Naive thymus-derived CD4-positive, alpha-beta T cell (primary cell): ENCODE measurements at regions of chr3 and their contacts with region 1.

Region 1: GRCh38 chr3:57597122-57597923 is at the start of gene ARF4:
- DNase-seq: peak; percentile 99 to 100 (median 100)
- ATAC-seq: peak; percentile 93
- H3K4me3 ChIP-seq: peak within 1 kb of the TSS; percentile 86
- H3K4me3 Mint-ChIP-seq: peak within 1 kb of the TSS; percentile 91 to 99 (median 98)
- H3K27ac ChIP-seq: peak within 1 kb of the TSS; percentile 94
- H3K27ac Mint-ChIP-seq: peak within 1 kb of the TSS; percentile 95 to 100 (median 99)
- H3K4me1 ChIP-seq: peaks cover 29 to 30% of the 10 kb centered on the region in 2 donors
- H3K4me1 Mint-ChIP-seq: peaks cover 33 to 64% (median 51%) of the 10 kb centered on the region in 7 donors
- H3K27me3 ChIP-seq: no peaks in the 10 kb centered on the region
- H3K27me3 Mint-ChIP-seq: no peaks in the 10 kb centered on the region
- total RNA-seq, gene ARF4: 50.9 to 85.5 (median 57.5) TPM

Region 2: DNA sequence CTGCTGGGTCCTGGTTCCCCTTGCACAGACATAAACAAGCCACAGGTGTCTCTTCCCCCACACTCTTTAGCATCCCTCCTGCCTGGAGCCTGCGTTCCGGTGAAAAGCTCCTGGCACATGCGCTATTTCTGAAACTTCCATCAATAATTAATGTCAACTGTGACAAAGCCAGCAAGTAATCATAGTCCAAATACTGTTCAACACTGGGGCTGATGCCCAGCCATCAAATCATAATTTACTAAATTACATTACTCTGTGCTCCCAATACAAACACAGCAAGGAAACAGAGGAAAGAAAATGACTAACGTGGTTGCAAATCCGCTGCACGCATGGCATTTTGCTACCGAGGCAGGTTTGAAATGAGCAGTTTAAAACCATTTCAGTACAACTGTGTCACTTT is 1423.7 kb before region 1 on chr3:
- CTCF ChIA-PET with region 1: no interaction called
- POLR2A ChIA-PET with region 1: no interaction called
- intact Hi-C with region 1: no loop called
- DNase-seq: no peak
- ATAC-seq: no peak
- H3K4me3 ChIP-seq: no peak overlapping the region
- H3K4me3 Mint-ChIP-seq: no peak overlapping the region
- H3K27ac ChIP-seq: no peak overlapping the region
- H3K27ac Mint-ChIP-seq: no peak overlapping the region
- H3K4me1 ChIP-seq: no peaks in the 10 kb centered on the region
- H3K4me1 Mint-ChIP-seq: no peaks in the 10 kb centered on the region
- H3K27me3 ChIP-seq: no peaks in the 10 kb centered on the region
- H3K27me3 Mint-ChIP-seq: peaks cover 0 to 23% (median 9%) of the 10 kb centered on the region in 5 donors

Region 3: GRCh38 chr3:57176045-57176444 is 421.3 kb before region 1 on chr3:
- CTCF ChIA-PET with region 1: no interaction called
- POLR2A ChIA-PET with region 1: no interaction called
- intact Hi-C with region 1: no loop called
- DNase-seq: no peak
- ATAC-seq: no peak
- H3K4me3 ChIP-seq: no peak overlapping the region
- H3K4me3 Mint-ChIP-seq: no peak overlapping the region
- H3K27ac ChIP-seq: no peak overlapping the region
- H3K27ac Mint-ChIP-seq: no peak overlapping the region
- H3K4me1 ChIP-seq: no peaks in the 10 kb centered on the region
- H3K4me1 Mint-ChIP-seq: peaks cover 0 to 2% (median 0%) of the 10 kb centered on the region in 7 donors
- H3K27me3 ChIP-seq: no peaks in the 10 kb centered on the region
- H3K27me3 Mint-ChIP-seq: peaks cover 9 to 52% (median 21%) of the 10 kb centered on the region in 5 donors

Region 4: GRCh38 chr3:57227204-57227929 is 370.0 kb before region 1 on chr3 and contains the start of gene APPL1:
- CTCF ChIA-PET with region 1: no interaction called
- POLR2A ChIA-PET with region 1: interaction called, 3 read pairs
- intact Hi-C with region 1: loop called (anchors 1 to 2 kb)
- DNase-seq: peak; percentile 76 to 97 (median 82)
- ATAC-seq: peak; percentile 96
- H3K4me3 ChIP-seq: peak within 1 kb of the TSS; percentile 88
- H3K4me3 Mint-ChIP-seq: peak within 1 kb of the TSS; percentile 89 to 95 (median 93)
- H3K27ac ChIP-seq: peak within 1 kb of the TSS; percentile 71
- H3K27ac Mint-ChIP-seq: peak within 1 kb of the TSS; percentile 72 to 90 (median 86)
- H3K4me1 ChIP-seq: peaks cover 9 to 12% of the 10 kb centered on the region in 2 donors
- H3K4me1 Mint-ChIP-seq: peaks cover 17 to 38% (median 29%) of the 10 kb centered on the region in 7 donors
- H3K27me3 ChIP-seq: no peaks in the 10 kb centered on the region
- H3K27me3 Mint-ChIP-seq: peaks cover 0 to 5% (median 0%) of the 10 kb centered on the region in 5 donors
- total RNA-seq, gene APPL1: 25.4 to 42.1 (median 29.2) TPM

Region 5: GRCh38 chr3:57555738-57556458 is 41.4 kb before region 1 on chr3 and contains the start of gene PDE12:
- CTCF ChIA-PET with region 1: interaction called, 5 read pairs
- POLR2A ChIA-PET with region 1: interaction called, 88 read pairs
- intact Hi-C with region 1: loop called (anchors 1 kb)
- DNase-seq: peak; percentile 68 to 87 (median 81)
- ATAC-seq: peak; percentile 86
- H3K4me3 ChIP-seq: peak within 1 kb of the TSS; percentile 74
- H3K4me3 Mint-ChIP-seq: peak within 1 kb of the TSS; percentile 85 to 99 (median 92)
- H3K27ac ChIP-seq: peak within 1 kb of the TSS; percentile 96
- H3K27ac Mint-ChIP-seq: peak within 1 kb of the TSS; percentile 94 to 99 (median 98)
- H3K4me1 ChIP-seq: peaks cover 22 to 26% of the 10 kb centered on the region in 2 donors
- H3K4me1 Mint-ChIP-seq: peaks cover 13 to 50% (median 39%) of the 10 kb centered on the region in 7 donors
- H3K27me3 ChIP-seq: no peaks in the 10 kb centered on the region
- H3K27me3 Mint-ChIP-seq: no peaks in the 10 kb centered on the region
- total RNA-seq, gene PDE12: 24.0 to 35.5 (median 27.8) TPM

Region 6: GRCh38 chr3:57582474-57583168 is 14.7 kb before region 1 on chr3:
- CTCF ChIA-PET with region 1: interaction called, 4 read pairs
- POLR2A ChIA-PET with region 1: interaction called, 3 read pairs
- intact Hi-C with region 1: loop called in 1 of 2 experiments (anchors 2 kb)
- DNase-seq: peak in 2 of 9 donors; percentile 7
- ATAC-seq: peak; percentile 73
- H3K4me3 ChIP-seq: no peak overlapping the region
- H3K4me3 Mint-ChIP-seq: no peak overlapping the region
- H3K27ac ChIP-seq: no peak overlapping the region
- H3K27ac Mint-ChIP-seq: peak overlapping the region in 5 of 9 donors; percentile 32 to 76 (median 65)
- H3K4me1 ChIP-seq: peaks cover 0 to 7% of the 10 kb centered on the region in 2 donors
- H3K4me1 Mint-ChIP-seq: peaks cover 7 to 43% (median 33%) of the 10 kb centered on the region in 7 donors
- H3K27me3 ChIP-seq: no peaks in the 10 kb centered on the region
- H3K27me3 Mint-ChIP-seq: no peaks in the 10 kb centered on the region

Region 7: GRCh38 chr3:57637391-57637790 is 40.1 kb after region 1 on chr3:
- CTCF ChIA-PET with region 1: no interaction called
- POLR2A ChIA-PET with region 1: no interaction called
- intact Hi-C with region 1: loop called (anchors 5 kb)
- DNase-seq: no peak
- ATAC-seq: no peak
- H3K4me3 ChIP-seq: no peak overlapping the region
- H3K4me3 Mint-ChIP-seq: no peak overlapping the region
- H3K27ac ChIP-seq: no peak overlapping the region
- H3K27ac Mint-ChIP-seq: no peak overlapping the region
- H3K4me1 ChIP-seq: no peaks in the 10 kb centered on the region
- H3K4me1 Mint-ChIP-seq: peaks cover 0 to 9% (median 0%) of the 10 kb centered on the region in 7 donors
- H3K27me3 ChIP-seq: no peaks in the 10 kb centered on the region
- H3K27me3 Mint-ChIP-seq: no peaks in the 10 kb centered on the region